ENCODE measurements at regions of chr14 and their contacts with region 1.

Region 1: DNA sequence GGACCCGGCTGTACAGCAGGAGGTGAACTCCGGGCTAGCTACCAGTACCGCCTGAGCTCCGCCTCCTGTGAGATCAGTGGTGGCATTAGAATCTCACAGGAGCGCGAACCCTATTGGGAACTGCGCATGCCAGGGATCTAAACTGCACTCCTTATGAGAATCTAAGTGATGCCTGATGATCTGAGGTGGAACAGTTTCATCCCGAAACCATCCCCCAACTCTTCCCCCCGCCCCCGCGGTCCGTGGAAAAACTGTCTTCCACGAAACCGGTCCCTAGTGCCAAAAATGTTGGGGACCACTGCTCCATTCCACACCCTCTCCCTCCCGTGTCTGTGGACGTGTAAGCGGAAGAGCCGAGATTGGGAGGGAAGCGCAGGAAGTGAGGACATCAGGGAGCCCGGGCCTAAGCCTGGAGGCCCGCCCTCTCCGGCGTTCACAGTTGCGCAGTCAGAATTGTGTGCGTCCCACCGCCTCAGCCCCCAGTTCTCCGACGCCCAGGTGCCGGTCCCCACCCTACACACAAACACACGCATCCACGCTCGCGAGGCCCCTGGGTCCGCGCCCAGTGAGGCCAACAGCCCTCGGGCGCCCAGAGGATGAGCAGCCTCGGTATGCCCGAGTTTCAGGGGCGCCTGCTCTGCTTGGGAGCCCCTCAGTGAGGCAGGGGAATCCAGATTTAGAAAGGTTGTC is 1.8 kb upstream of the RNASE4 start:
- DNase-seq: peak; percentile 87
- H3K4me3 ChIP-seq: peak overlapping the region; percentile 87 to 91 (median 89)
- H3K27ac ChIP-seq: peak overlapping the region; percentile 92
- H3K4me1 ChIP-seq: peaks cover 22% of the 10 kb centered on the region
- H3K27me3 ChIP-seq: no peaks in the 10 kb centered on the region
- CTCF ChIP-seq: peak in 1 of 2 donors; percentile 31

Region 2: GRCh38 chr14:20343092-20343861 is 339.3 kb before region 1 on chr14 and contains the start of gene PARP2:
- CTCF ChIA-PET with region 1: no interaction called
- dilution Hi-C with region 1: no loop called
- in situ Hi-C with region 1: loop called in 1 of 2 experiments (anchors 25 kb)
- intact Hi-C with region 1: loop called (anchors 1 kb)
- DNase-seq: peak; percentile 100
- H3K4me3 ChIP-seq: peak within 1 kb of the TSS; percentile 85 to 97 (median 86)
- H3K27ac ChIP-seq: peak within 1 kb of the TSS; percentile 97
- H3K4me1 ChIP-seq: no peaks in the 10 kb centered on the region
- H3K27me3 ChIP-seq: no peaks in the 10 kb centered on the region
- CTCF ChIP-seq: no peak
- total RNA-seq, gene PARP2: 5.8 to 29.3 TPM

Region 3: GRCh38 chr14:20454516-20455354 is 227.8 kb before region 1 on chr14 and contains the starts of genes APEX1 and OSGEP:
- CTCF ChIA-PET with region 1: no interaction called
- dilution Hi-C with region 1: loop called (anchors 10 kb)
- in situ Hi-C with region 1: no loop called
- intact Hi-C with region 1: loop called (anchors 2 kb)
- DNase-seq: peak; percentile 98
- H3K4me3 ChIP-seq: peak within 1 kb of the TSS; percentile 94 to 97 (median 97)
- H3K27ac ChIP-seq: peak within 1 kb of the TSS; percentile 94
- H3K4me1 ChIP-seq: peaks cover 9% of the 10 kb centered on the region
- H3K27me3 ChIP-seq: no peaks in the 10 kb centered on the region
- CTCF ChIP-seq: no peak
- total RNA-seq, gene APEX1: 96.4 to 128 TPM
- total RNA-seq, gene OSGEP: 22.6 to 34.8 TPM

Region 4: DNA sequence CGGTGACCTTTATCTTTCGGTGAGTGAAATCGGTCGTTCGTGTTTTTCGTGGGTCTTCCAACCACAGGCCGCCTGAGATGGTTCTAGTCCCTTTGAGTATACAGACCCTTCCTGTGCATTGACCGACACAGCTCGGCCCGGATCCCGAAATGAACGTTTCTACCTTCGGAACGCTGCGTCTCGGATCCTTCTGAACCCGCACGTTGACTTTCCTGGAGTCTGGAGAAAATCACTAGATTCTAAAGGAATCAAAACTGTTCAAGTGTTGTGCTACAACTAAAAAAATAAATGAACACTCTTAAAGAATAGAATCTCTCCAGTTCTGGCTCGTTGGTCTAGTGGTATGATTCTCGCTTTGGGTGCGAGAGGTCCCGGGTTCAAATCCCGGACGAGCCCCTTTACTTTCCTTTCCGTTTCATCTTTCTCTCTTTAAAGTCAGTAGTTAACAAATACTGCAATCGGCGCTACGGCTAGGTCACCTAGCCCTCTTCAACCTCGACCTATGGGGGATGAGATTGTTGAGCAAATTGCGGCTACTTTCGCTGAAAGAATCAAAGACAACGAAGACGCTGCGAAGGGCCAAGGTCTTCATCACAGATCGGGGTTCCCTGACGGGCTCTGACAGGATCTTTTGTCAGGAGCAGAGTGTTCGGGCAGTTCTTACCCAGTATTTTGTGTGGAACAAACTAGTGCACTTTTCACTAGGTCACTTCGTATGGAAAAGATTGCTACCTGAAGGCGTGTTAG is 49.7 kb before region 1 on chr14:
- CTCF ChIA-PET with region 1: no interaction called
- dilution Hi-C with region 1: no loop called
- in situ Hi-C with region 1: no loop called
- intact Hi-C with region 1: loop called (anchors 1 kb)
- DNase-seq: peak; percentile 85
- H3K4me3 ChIP-seq: peak overlapping the region; percentile 11 to 55 (median 55)
- H3K27ac ChIP-seq: no peak overlapping the region
- H3K4me1 ChIP-seq: peaks cover 18% of the 10 kb centered on the region
- H3K27me3 ChIP-seq: no peaks in the 10 kb centered on the region
- CTCF ChIP-seq: no peak

Region 5: GRCh38 chr14:20652996-20653975 is 29.3 kb before region 1 on chr14:
- CTCF ChIA-PET with region 1: interaction called, 4 read pairs
- dilution Hi-C with region 1: no loop called
- in situ Hi-C with region 1: no loop called
- intact Hi-C with region 1: loop called (anchors 1 kb)
- DNase-seq: peak; percentile 90
- H3K4me3 ChIP-seq: peak overlapping the region; percentile 4 to 36 (median 14)
- H3K27ac ChIP-seq: no peak overlapping the region
- H3K4me1 ChIP-seq: no peaks in the 10 kb centered on the region
- H3K27me3 ChIP-seq: peaks cover 2% of the 10 kb centered on the region
- CTCF ChIP-seq: no peak

Region 6: DNA sequence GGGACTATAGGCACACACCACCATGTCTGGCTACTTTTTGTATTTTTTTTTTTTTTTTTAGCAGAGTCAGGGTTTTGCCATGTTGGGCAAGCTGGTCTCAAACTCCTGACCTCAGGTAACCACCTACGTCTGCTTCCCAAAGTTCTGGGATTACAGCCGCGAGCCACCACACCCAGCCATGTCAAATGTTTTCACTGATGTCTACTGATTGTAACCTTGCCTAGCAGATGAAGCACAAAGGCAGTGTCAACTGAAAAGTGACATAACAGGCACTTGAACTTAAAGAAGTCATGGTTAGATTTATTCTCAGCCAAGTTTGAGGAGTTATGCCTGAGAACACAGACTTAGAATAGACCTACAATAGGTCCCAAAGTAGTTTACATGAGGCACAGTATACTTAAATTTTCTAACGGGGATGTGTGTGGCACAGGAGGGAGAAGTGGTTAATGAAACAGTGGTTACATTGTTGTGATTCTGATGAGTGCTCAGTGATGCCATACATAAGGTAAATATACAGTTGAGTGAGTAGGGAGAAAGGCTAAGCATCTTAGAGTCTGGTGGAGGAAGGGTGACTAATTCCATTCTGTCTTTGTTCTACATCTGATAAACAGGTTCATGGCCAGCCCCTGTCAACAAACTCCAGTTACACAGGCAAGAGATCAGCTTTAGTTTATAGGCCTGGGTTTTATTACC is 10.8 kb before region 1 on chr14:
- CTCF ChIA-PET with region 1: no interaction called
- dilution Hi-C with region 1: no loop called
- in situ Hi-C with region 1: no loop called
- intact Hi-C with region 1: no loop called
- DNase-seq: no peak
- H3K4me3 ChIP-seq: no peak overlapping the region
- H3K27ac ChIP-seq: no peak overlapping the region
- H3K4me1 ChIP-seq: no peaks in the 10 kb centered on the region
- H3K27me3 ChIP-seq: no peaks in the 10 kb centered on the region
- CTCF ChIP-seq: no peak

Region 7: DNA sequence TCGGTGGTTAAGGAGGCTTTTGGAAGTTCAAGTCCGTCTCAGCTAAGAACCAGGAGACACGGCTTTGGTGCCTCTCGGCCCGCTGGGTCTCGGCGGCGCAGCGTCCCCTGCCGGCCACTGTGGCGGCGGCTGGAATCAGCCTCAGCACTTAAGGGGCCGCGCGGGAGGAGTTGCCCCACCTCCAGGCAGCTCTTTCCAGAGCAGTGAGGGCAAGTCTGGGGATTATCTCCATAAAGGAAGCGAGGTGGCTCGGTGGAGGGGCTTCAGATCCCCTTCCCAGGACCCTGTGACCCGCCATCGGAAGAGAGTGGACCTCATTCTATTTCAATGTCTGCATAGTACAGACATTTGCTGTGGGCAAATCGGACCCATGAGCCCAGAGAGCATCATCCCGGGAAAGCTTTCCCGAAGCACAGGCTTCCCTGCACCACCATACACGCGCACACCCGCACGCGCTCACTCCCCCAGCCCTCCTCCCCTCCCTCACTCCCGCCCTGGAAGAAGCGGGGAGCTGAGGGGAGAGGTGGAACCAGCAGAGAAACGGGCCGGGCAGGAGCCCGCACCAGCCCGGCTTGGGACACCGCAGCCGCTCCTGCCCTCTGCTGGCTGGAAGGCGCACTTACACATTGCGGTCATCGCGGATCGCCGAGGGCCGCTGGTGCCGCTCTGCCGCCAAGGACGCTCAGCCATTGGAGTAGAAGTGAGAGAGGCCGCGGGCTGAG is 288.6 kb after region 1 on chr14:
- CTCF ChIA-PET with region 1: no interaction called
- dilution Hi-C with region 1: no loop called
- in situ Hi-C with region 1: no loop called
- intact Hi-C with region 1: no loop called
- DNase-seq: peak; percentile 74
- H3K4me3 ChIP-seq: peak overlapping the region; percentile 56 to 65 (median 61)
- H3K27ac ChIP-seq: peak overlapping the region; percentile 41
- H3K4me1 ChIP-seq: peaks cover 21% of the 10 kb centered on the region
- H3K27me3 ChIP-seq: no peaks in the 10 kb centered on the region
- CTCF ChIP-seq: peak; percentile 94 to 99

Region 8: GRCh38 chr14:21092273-21093011 is 409.9 kb after region 1 on chr14:
- CTCF ChIA-PET with region 1: no interaction called
- dilution Hi-C with region 1: no loop called
- in situ Hi-C with region 1: loop called in 1 of 2 experiments (anchors 25 kb)
- intact Hi-C with region 1: no loop called
- DNase-seq: peak; percentile 56
- H3K4me3 ChIP-seq: no peak overlapping the region
- H3K27ac ChIP-seq: no peak overlapping the region
- H3K4me1 ChIP-seq: peaks cover 19% of the 10 kb centered on the region
- H3K27me3 ChIP-seq: no peaks in the 10 kb centered on the region
- CTCF ChIP-seq: peak; percentile 100